ENCODE measurements at regions of chr2 and their contacts with region 1.

Region 1: DNA sequence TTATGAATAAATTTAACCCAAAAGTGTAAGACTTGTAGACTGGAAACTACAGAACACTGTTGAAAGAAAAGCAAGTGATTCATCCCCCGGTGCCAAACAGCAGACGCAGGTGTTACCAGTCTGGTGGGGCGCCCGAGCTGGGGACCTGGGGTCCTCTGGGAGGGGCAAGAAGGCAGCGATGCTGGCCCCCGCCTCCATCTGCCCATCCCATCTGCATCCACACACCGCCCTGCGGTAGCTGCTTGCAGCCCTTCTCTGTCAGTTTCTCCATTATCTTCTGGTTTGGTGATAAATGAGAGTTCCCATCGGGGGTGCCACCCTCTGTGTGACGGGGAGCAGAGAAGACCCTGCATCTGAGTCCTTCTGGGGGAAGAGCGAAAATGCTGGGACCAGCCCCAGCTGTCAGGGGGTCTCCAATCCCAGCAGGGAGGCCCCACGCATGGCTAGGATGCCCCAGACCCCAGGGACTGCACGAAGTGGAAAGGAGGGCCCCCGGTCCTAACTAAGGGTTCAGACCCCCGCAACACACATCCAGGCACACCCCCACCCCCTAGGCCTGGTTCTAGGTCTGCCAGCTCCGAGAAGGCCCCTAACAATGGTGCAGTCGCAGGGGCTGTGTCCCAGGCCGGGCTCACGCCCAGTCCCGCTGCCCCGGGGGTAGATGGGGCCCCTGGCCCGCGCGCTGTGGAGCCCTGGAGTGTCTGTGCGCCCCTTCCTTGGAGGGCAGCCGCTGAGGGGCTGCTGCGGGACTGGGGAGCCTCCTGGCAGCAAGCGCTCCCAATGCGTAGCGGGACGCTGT is 686 bp upstream of the RGPD8 start:
- DNase-seq: no peak
- ATAC-seq: no peak
- H3K4me3 ChIP-seq: no peak overlapping the region
- H3K27ac ChIP-seq: no peak overlapping the region
- H3K4me1 ChIP-seq: no peaks in the 10 kb centered on the region
- H3K27me3 ChIP-seq: no peaks in the 10 kb centered on the region
- CTCF ChIP-seq: no peak
- POLR2A ChIP-seq: no peak
- RAD21 ChIP-seq: no peak

Region 2: GRCh38 chr2:112121682-112122254 is 312.4 kb before region 1 on chr2:
- CTCF ChIA-PET with region 1: interaction called, 8 read pairs
- POLR2A ChIA-PET with region 1: no interaction called
- RAD21 ChIA-PET with region 1: no interaction called
- intact Hi-C with region 1: loop called (anchors 5 kb)
- DNase-seq: peak; percentile 26
- ATAC-seq: no peak
- H3K4me3 ChIP-seq: no peak overlapping the region
- H3K27ac ChIP-seq: no peak overlapping the region
- H3K4me1 ChIP-seq: no peaks in the 10 kb centered on the region
- H3K27me3 ChIP-seq: no peaks in the 10 kb centered on the region
- CTCF ChIP-seq: peak; percentile 58 to 78 (median 71); a peak in 5 of 6 replicates
- POLR2A ChIP-seq: no peak
- RAD21 ChIP-seq: peak; percentile 83

Region 3: DNA sequence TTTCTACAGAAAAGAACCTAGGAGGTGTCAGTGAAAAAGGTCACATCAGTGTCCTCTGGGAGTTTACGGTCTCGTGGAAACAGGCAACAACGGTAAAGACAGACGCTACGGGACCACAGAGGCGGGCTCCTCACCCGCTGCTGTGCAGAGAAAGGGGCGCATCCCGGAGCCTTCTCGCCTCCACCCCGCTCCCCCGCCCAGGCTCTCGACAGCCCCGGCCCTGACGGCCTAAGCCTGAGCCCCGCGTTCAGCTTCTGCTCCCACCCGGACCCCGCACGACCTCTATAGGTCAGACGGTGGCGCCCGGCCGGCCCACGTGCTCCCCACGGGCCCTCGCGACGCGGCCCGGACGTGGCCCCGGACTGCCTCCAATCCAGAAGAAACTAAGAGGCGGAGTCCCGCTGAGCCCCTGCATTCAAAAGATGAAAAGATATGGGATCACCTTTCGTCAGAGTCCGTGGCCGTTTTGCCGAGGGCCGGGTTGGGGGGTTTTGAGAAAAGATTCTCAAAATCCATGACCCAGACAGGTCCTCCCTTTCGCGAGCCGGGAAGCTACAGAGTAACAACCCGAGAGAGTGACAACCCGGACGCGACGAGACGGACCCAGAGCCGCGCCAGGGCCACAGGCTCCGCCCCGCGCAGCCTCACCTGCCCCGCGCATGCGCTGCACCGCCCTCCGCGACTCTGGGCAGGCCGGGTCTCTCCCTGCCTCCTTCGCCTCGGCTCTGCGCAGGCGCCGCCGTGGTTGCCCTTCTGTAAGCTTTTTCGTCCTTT is 179.5 kb before region 1 on chr2 and contains the start of gene ZC3H8:
- CTCF ChIA-PET with region 1: interaction called, 6 read pairs
- POLR2A ChIA-PET with region 1: no interaction called
- RAD21 ChIA-PET with region 1: no interaction called
- intact Hi-C with region 1: loop called (anchors 5 kb)
- DNase-seq: peak; percentile 75
- ATAC-seq: peak; percentile 98
- H3K4me3 ChIP-seq: peak within 1 kb of the TSS; percentile 70 to 72
- H3K27ac ChIP-seq: peak within 1 kb of the TSS; percentile 67
- H3K4me1 ChIP-seq: peaks cover 0 to 20% of the 10 kb centered on the region in 2 experiments; a peak in 2 of 4 replicates
- H3K27me3 ChIP-seq: no peaks in the 10 kb centered on the region
- CTCF ChIP-seq: no peak
- POLR2A ChIP-seq: peak; percentile 83
- RAD21 ChIP-seq: no peak
- total RNA-seq, gene ZC3H8: 13.4 TPM

Region 4: GRCh38 chr2:113219889-113220641 is 785.9 kb after region 1 on chr2:
- CTCF ChIA-PET with region 1: no interaction called
- POLR2A ChIA-PET with region 1: no interaction called
- RAD21 ChIA-PET with region 1: no interaction called
- intact Hi-C with region 1: no loop called
- DNase-seq: peak; percentile 50
- ATAC-seq: peak; percentile 98
- H3K4me3 ChIP-seq: peak overlapping the region; percentile 15 to 33
- H3K27ac ChIP-seq: peak overlapping the region; percentile 44
- H3K4me1 ChIP-seq: peaks cover 31 to 37% of the 10 kb centered on the region in 2 experiments
- H3K27me3 ChIP-seq: no peaks in the 10 kb centered on the region
- CTCF ChIP-seq: no peak
- POLR2A ChIP-seq: no peak
- RAD21 ChIP-seq: no peak